Motor neuron (in vitro differentiated cells): ENCODE measurements at regions of chr14 and their contacts with region 1.

Region 1: DNA sequence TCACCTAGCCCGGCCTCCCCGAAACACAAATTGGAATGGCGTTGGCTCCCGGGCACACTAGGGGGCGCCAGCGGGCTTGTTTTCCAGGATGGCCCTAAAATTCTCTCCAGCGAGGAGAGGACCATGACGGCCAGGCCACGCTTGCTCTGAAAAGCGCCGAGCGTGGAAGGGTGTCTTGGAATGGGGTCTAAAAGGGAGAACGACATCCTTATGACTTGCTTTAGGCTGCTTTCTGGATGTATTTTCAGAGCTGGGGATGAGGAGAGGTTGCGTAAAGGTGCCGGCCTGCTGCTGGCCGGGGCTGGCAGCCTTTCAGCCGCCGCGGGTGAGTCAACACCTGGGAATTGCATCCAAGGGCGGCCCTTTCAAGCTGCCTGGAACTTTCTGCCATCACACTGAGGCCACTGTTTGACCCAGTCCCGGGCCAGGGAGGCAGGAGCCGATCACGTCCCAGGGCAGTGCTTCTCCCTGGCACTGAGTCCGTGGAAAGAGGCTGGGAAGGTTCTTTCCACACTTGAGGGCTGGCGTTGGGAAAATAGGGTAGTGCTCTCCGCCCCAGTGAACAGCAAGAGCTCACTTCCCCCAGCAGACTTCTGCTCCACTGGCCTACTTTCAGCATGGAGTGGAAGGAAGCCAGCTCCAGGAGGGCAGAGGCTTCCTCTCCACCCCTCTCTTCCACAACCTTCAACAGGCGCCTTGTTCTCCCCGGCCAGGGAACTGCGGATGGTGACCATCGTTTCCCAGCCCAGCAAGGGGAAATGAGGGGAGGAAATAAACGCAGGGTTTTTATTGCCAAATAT is 216.2 kb downstream of the TTC8 start:
- ATAC-seq: peak; percentile 89 to 96 (median 95)
- H3K4me3 ChIP-seq: peak overlapping the region in 2 of 5 donors; percentile 5 to 17
- H3K27ac ChIP-seq: peak overlapping the region in 1 of 2 donors; percentile 6
- H3K4me1 ChIP-seq: peaks cover 0 to 9% of the 10 kb centered on the region in 2 donors

Region 2: GRCh38 chr14:89185919-89186855 is 145.5 kb after region 1 on chr14:
- in situ Hi-C with region 1: no loop called
- ATAC-seq: peak in 4 of 8 experiments; percentile 8 to 90 (median 58)
- H3K4me3 ChIP-seq: no peak overlapping the region
- H3K27ac ChIP-seq: no peak overlapping the region
- H3K4me1 ChIP-seq: peaks cover 17 to 25% of the 10 kb centered on the region in 2 donors

Region 3: GRCh38 chr14:89351516-89352404 is 311.1 kb after region 1 on chr14:
- in situ Hi-C with region 1: loop called in 1 of 9 experiments (anchors 25 kb)
- ATAC-seq: peak in 4 of 8 experiments; percentile 24 to 83 (median 72)
- H3K4me3 ChIP-seq: no peak overlapping the region
- H3K27ac ChIP-seq: peak overlapping the region in 1 of 2 donors; percentile 12
- H3K4me1 ChIP-seq: peaks cover 52 to 56% of the 10 kb centered on the region in 2 donors

Region 4: DNA sequence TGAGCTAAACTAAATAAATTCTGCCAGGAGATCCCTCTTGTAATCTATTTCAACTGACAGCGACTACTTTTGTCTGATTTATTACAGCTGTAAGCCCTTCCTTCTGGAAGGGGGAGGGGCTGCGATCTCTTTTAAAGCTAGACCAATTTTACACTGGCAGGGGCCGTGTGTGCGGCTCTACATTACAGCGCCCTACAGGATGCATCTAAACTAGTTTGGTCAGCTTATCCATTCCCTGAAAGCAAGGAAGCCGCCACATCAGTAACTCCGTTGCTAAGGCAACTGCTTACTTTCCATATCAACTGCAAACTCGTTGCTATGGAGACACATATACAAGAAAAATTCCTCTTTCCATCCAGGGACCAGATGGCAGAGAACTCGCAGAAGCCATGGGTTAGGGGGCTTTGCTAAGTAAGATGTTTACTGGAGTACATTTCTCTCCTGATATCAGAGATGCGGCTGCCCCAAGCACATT is 359.0 kb after region 1 on chr14:
- in situ Hi-C with region 1: loop called in 2 of 9 experiments (anchors 25 kb)
- ATAC-seq: peak; percentile 90 to 96 (median 94)
- H3K4me3 ChIP-seq: peak overlapping the region; percentile 3 to 12 (median 6)
- H3K27ac ChIP-seq: peak overlapping the region; percentile 71
- H3K4me1 ChIP-seq: peaks cover 34 to 36% of the 10 kb centered on the region in 2 donors

Region 5: GRCh38 chr14:89416002-89416995 is 375.6 kb after region 1 on chr14:
- in situ Hi-C with region 1: loop called in 2 of 9 experiments (anchors 10 to 25 kb)
- ATAC-seq: peak; percentile 63 to 77 (median 68)
- H3K4me3 ChIP-seq: peak overlapping the region; percentile 49 to 84 (median 80)
- H3K27ac ChIP-seq: peak overlapping the region; percentile 42 to 92
- H3K4me1 ChIP-seq: peaks cover 11 to 12% of the 10 kb centered on the region in 2 donors

Region 6: DNA sequence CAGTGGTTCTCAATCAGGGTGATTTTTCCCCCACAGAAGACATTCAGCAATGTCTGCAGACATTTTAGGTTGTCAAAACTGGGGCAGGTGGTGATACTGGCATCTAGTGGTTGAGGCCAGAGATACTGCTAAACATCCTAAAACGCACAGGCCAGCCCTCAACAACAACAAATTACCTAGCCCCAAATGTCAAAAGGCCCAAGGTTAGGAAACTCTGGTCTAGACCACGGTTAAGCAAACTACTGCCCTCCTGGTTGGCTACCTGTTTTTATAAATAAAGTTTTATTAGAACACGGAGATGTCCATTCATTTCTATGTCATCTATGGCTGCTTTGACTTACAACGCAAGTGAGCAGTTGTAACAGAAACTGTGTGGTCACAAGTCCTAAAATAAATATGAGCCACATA is 727.2 kb after region 1 on chr14:
- in situ Hi-C with region 1: loop called in 1 of 9 experiments (anchors 25 kb)
- ATAC-seq: peak in 3 of 8 experiments; percentile 53 to 82 (median 79)
- H3K4me3 ChIP-seq: no peak overlapping the region
- H3K27ac ChIP-seq: no peak overlapping the region
- H3K4me1 ChIP-seq: no peaks in the 10 kb centered on the region

Region 7: GRCh38 chr14:89915114-89915878 is 874.6 kb after region 1 on chr14:
- in situ Hi-C with region 1: loop called (anchors 10 to 25 kb)
- ATAC-seq: peak in 3 of 8 experiments; percentile 33 to 54 (median 46)
- H3K4me3 ChIP-seq: no peak overlapping the region
- H3K27ac ChIP-seq: no peak overlapping the region
- H3K4me1 ChIP-seq: peaks cover 27 to 38% of the 10 kb centered on the region in 2 donors